A549 (cell line): ENCODE measurements at regions of chr7 and their contacts with region 1.

Region 1: GRCh38 chr7:51444936-51445335 is 128.3 kb upstream of the COBL start:
- DNase-seq: no peak
- ATAC-seq: no peak
- H3K4me3 ChIP-seq: no peak overlapping the region
- H3K27ac ChIP-seq: no peak overlapping the region
- H3K4me1 ChIP-seq: no peaks in the 10 kb centered on the region
- CTCF ChIP-seq: no peak
- EP300 ChIP-seq: no peak
- POLR2A ChIP-seq: no peak
- RAD21 ChIP-seq: no peak

Region 2: DNA sequence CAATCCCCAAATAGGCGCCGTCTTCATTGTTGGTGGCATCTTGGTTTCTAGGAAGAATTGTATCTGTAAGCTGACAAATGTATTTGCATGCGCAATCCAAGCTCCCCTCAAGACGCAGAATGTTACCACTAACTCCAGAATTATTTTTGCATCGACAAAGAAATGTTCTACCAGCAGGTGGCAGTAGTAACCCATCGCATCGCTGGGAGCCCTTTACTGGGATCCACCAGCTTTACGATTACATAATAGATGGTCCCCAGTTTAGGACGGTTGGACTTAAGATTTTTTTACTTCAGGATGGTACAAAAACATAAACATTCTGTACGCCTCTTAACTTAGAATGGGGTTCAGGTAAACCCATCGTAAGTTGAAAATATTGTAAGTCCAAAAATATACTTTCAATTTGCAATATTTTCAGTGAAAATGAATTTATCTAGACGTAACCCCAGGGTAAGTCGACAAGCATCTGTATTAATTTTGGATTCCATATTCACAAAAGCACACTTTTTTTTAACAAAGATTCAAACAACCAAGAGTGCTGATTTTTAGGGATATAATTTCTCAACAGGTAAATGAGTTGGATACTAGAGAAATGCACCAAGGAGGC is 14.4 kb before region 1 on chr7:
- CTCF ChIA-PET with region 1: interaction called, 11 read pairs
- POLR2A ChIA-PET with region 1: no interaction called
- DNase-seq: peak; percentile 51 to 74
- ATAC-seq: peak; percentile 57 to 82; a peak in 4 of 6 replicates
- H3K4me3 ChIP-seq: no peak overlapping the region
- H3K27ac ChIP-seq: no peak overlapping the region
- H3K4me1 ChIP-seq: no peaks in the 10 kb centered on the region
- CTCF ChIP-seq: peak; percentile 84
- EP300 ChIP-seq: no peak
- POLR2A ChIP-seq: no peak
- RAD21 ChIP-seq: peak; percentile 88 to 91

Region 3: GRCh38 chr7:51569581-51569980 is 124.6 kb after region 1 on chr7:
- CTCF ChIA-PET with region 1: no interaction called
- POLR2A ChIA-PET with region 1: no interaction called
- DNase-seq: no peak
- ATAC-seq: no peak
- H3K4me3 ChIP-seq: no peak overlapping the region
- H3K27ac ChIP-seq: no peak overlapping the region
- H3K4me1 ChIP-seq: no peaks in the 10 kb centered on the region
- CTCF ChIP-seq: no peak
- EP300 ChIP-seq: no peak
- POLR2A ChIP-seq: no peak
- RAD21 ChIP-seq: no peak